PC-3 (cell line): ENCODE measurements at regions of chr1 and their contacts with region 1.

Region 1: DNA sequence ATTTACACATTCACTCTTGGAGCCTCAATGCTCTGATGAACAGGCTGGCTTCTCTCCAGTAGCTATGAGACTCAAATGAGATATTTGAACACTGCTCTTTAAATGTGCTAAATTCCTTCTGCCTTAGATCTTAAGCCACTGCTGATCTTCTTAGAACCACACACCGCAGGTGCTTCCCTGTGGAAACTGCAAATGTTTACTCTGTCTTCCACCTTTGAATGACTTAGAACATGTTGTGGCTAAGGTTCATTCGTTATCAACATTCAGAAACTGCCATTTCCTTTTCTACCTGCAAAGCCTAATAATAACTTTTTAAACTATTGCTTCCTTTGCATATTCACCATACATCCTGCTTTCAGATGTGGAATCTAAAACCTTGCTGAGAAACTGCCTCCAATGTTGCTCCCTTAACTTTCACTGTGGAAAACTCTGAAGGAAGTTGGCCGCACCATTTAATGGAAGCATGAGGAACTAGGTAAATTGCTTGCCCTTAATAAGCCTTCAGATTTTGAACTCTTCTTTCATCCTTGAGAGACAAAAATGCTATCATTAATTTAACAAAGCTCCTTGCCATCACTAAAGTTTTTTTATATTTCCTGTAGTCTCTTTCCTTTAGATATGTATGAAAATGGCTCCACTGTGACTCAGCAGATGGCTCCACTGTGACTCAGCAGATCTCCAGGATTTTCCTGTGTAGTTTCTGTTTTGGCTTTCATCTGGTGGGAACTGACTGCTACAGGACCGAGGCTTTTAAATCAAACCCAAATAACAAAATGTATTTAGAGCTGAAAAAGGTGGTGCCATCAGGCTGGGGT is 143.8 kb downstream of the TNFSF18 start:
- DNase-seq: peak; percentile 99
- ATAC-seq: peak; percentile 25
- H3K4me3 ChIP-seq: no peak overlapping the region; the same call in 1 of the 2 replicates
- H3K27ac ChIP-seq: peak overlapping the region; percentile 77
- H3K4me1 ChIP-seq: peaks cover 64% of the 10 kb centered on the region
- H3K27me3 ChIP-seq: no peaks in the 10 kb centered on the region
- CTCF ChIP-seq: no peak

Region 2: DNA sequence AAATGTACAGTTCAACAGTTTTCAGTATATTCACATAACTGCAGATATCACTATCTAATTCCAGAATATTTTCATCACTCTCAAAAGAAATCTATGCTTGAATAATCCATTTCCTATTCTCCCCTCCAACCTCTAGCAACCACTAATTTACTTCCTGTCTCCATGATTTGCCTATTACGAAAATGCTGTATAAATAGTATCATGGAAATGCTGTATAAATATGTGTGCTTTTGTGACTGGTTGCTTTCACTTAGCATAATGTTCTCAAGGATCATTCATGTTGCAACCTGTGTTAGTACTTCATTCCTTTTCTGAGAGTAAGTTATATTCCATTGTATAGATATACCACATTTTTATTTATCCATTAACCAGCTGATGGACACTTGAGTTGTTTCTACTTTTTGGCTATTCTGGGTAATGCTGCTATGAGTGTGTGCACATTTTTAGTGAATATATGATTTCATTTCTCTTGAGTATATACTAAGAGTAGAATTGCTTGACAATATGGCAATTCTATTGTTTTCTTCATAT is 28.1 kb after region 1 on chr1:
- CTCF ChIA-PET with region 1: no interaction called
- POLR2A ChIA-PET with region 1: no interaction called
- intact Hi-C with region 1: loop called (anchors 2 kb)
- DNase-seq: no peak
- ATAC-seq: no peak
- H3K4me3 ChIP-seq: no peak overlapping the region
- H3K27ac ChIP-seq: peak overlapping the region; percentile 70
- H3K4me1 ChIP-seq: peaks cover 34% of the 10 kb centered on the region
- H3K27me3 ChIP-seq: no peaks in the 10 kb centered on the region
- CTCF ChIP-seq: no peak

Region 3: GRCh38 chr1:173097001-173097400 is 190.0 kb after region 1 on chr1:
- CTCF ChIA-PET with region 1: no interaction called
- POLR2A ChIA-PET with region 1: no interaction called
- intact Hi-C with region 1: no loop called
- DNase-seq: peak; percentile 82
- ATAC-seq: peak; percentile 39
- H3K4me3 ChIP-seq: no peak overlapping the region
- H3K27ac ChIP-seq: no peak overlapping the region
- H3K4me1 ChIP-seq: peaks cover 26% of the 10 kb centered on the region
- H3K27me3 ChIP-seq: no peaks in the 10 kb centered on the region
- CTCF ChIP-seq: no peak